WTC11 (cell line): ENCODE measurements at regions of chr20 and their contacts with region 1.

Region 1: GRCh38 chr20:47379433-47380150 is 23.1 kb upstream of the ZMYND8 start:
- DNase-seq: no peak
- ATAC-seq: no peak
- H3K4me3 Mint-ChIP-seq: no peak overlapping the region
- H3K27ac Mint-ChIP-seq: peak overlapping the region; percentile 58
- H3K4me1 Mint-ChIP-seq: peaks cover 31% of the 10 kb centered on the region
- H3K27me3 Mint-ChIP-seq: no peaks in the 10 kb centered on the region; the same call in 1 of the 2 replicates
- CTCF ChIP-seq: no peak

Region 2: DNA sequence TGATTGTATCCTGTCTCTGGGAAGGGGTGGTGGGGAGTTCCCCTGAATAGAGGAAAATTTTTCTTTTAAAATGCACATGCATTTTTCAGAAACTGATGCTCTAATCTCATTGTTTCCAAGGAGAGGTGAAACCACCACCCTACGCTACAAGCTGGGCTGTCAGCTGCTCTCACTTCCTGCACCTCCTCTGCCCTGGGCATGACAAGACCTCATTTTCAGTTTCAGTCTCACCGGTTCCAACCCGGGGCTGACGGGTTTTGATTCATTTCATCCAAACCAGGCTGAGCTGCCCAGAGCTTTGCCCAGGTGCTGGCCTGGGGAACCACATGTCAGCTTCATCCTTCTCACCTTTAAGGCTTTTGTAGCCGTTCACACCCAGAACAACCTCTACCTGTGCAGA is 385.3 kb before region 1 on chr20:
- CTCF ChIA-PET with region 1: no interaction called
- POLR2A ChIA-PET with region 1: no interaction called
- DNase-seq: no peak
- ATAC-seq: no peak
- H3K4me3 Mint-ChIP-seq: no peak overlapping the region
- H3K27ac Mint-ChIP-seq: no peak overlapping the region
- H3K4me1 Mint-ChIP-seq: peaks cover 64% of the 10 kb centered on the region
- H3K27me3 Mint-ChIP-seq: no peaks in the 10 kb centered on the region
- CTCF ChIP-seq: no peak

Region 3: GRCh38 chr20:47196091-47197081 is 183.2 kb before region 1 on chr20:
- CTCF ChIA-PET with region 1: interaction called, 40 read pairs
- POLR2A ChIA-PET with region 1: interaction called, 3 read pairs
- DNase-seq: peak; percentile 91
- ATAC-seq: peak; percentile 87
- H3K4me3 Mint-ChIP-seq: no peak overlapping the region
- H3K27ac Mint-ChIP-seq: no peak overlapping the region
- H3K4me1 Mint-ChIP-seq: 0 out of 2 replicates have a peak, but pooled peaks cover 2% of the 10 kb centered on the region
- H3K27me3 Mint-ChIP-seq: no peaks in the 10 kb centered on the region
- CTCF ChIP-seq: peak; percentile 99

Region 4: GRCh38 chr20:47241345-47241781 is 138.2 kb before region 1 on chr20:
- CTCF ChIA-PET with region 1: interaction called, 25 read pairs
- POLR2A ChIA-PET with region 1: interaction called, 3 read pairs
- DNase-seq: no peak
- ATAC-seq: no peak
- H3K4me3 Mint-ChIP-seq: no peak overlapping the region
- H3K27ac Mint-ChIP-seq: peak overlapping the region; percentile 84; the same call in 1 of the 2 replicates
- H3K4me1 Mint-ChIP-seq: peaks cover 14% of the 10 kb centered on the region
- H3K27me3 Mint-ChIP-seq: no peaks in the 10 kb centered on the region
- CTCF ChIP-seq: no peak

Region 5: GRCh38 chr20:47281376-47281775 is 98.2 kb before region 1 on chr20:
- CTCF ChIA-PET with region 1: interaction called, 250 read pairs
- POLR2A ChIA-PET with region 1: no interaction called
- DNase-seq: no peak
- ATAC-seq: no peak
- H3K4me3 Mint-ChIP-seq: no peak overlapping the region
- H3K27ac Mint-ChIP-seq: peak overlapping the region; percentile 87
- H3K4me1 Mint-ChIP-seq: peaks cover 25% of the 10 kb centered on the region
- H3K27me3 Mint-ChIP-seq: no peaks in the 10 kb centered on the region
- CTCF ChIP-seq: no peak

Region 6: DNA sequence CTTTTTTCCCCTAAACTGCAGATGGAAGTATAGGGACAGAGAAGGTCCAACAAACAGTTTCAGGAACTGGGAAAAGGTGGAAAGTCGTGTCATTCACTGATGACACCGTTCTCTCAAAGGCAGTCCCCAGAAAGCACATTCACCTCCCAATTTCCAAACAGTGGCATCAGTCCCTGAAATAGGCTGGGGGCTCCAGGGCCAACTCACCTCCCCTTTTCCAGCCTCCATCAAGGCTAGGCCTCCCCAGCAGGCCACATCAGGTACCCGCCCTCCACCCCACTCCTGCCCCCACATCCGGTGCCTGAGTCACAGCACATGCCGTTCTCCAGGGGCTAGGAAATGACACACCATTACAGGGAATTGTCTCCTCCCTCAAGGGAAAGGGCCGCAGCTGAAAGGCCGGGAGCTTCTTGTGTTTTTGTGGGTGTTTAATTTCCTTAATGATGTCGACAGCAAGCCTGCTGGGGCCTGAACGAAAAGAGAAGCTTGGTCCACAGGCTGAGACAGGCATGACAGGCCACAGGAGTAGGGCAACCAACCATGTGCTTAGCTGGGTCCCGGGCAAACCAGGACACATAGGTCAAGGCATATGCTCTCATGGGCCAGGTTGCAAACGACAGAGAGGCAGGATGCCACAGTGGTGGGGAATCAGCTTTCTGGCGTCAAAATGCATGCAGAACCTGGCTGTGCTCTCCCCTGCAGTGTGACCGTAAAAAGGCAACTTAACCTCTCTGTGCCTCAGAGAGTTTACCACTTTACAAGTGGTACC is 62.3 kb before region 1 on chr20:
- CTCF ChIA-PET with region 1: interaction called, 34 read pairs
- POLR2A ChIA-PET with region 1: interaction called, 6 read pairs
- DNase-seq: peak; percentile 26
- ATAC-seq: peak; percentile 1; the same call in 1 of the 2 replicates
- H3K4me3 Mint-ChIP-seq: peak overlapping the region; percentile 59
- H3K27ac Mint-ChIP-seq: peak overlapping the region; percentile 100
- H3K4me1 Mint-ChIP-seq: peaks cover 89% of the 10 kb centered on the region
- H3K27me3 Mint-ChIP-seq: no peaks in the 10 kb centered on the region
- CTCF ChIP-seq: no peak

Region 7: GRCh38 chr20:47365023-47365764 is 14.4 kb before region 1 on chr20:
- CTCF ChIA-PET with region 1: interaction called, 111 read pairs
- POLR2A ChIA-PET with region 1: interaction called, 5 read pairs
- DNase-seq: no peak
- ATAC-seq: no peak
- H3K4me3 Mint-ChIP-seq: peak overlapping the region; percentile 2; the same call in 1 of the 2 replicates
- H3K27ac Mint-ChIP-seq: peak overlapping the region; percentile 93
- H3K4me1 Mint-ChIP-seq: peaks cover 50% of the 10 kb centered on the region
- H3K27me3 Mint-ChIP-seq: no peaks in the 10 kb centered on the region
- CTCF ChIP-seq: no peak

Region 8: GRCh38 chr20:48668451-48668952 is 1288.9 kb after region 1 on chr20:
- CTCF ChIA-PET with region 1: no interaction called
- POLR2A ChIA-PET with region 1: interaction called, 13 read pairs
- DNase-seq: no peak
- ATAC-seq: no peak
- H3K4me3 Mint-ChIP-seq: no peak overlapping the region
- H3K27ac Mint-ChIP-seq: no peak overlapping the region
- H3K4me1 Mint-ChIP-seq: no peaks in the 10 kb centered on the region
- H3K27me3 Mint-ChIP-seq: no peaks in the 10 kb centered on the region
- CTCF ChIP-seq: no peak